ENCODE measurements at regions of chr4 and their contacts with region 1.

Region 1: GRCh38 chr4:38179690-38180377 is 219.6 kb downstream of the PTTG2 start:
- DNase-seq: peak; percentile 56
- ATAC-seq: peak; percentile 85
- H3K4me3 ChIP-seq: no peak overlapping the region
- H3K27ac ChIP-seq: no peak overlapping the region
- H3K4me1 ChIP-seq: peaks cover 39% of the 10 kb centered on the region
- H3K27me3 ChIP-seq: no peaks in the 10 kb centered on the region
- CTCF ChIP-seq: peak; percentile 76 to 94 (median 88)
- EP300 ChIP-seq: no peak
- POLR2A ChIP-seq: no peak
- RAD21 ChIP-seq: peak; percentile 98

Region 2: GRCh38 chr4:38078590-38079421 is 101.0 kb before region 1 on chr4:
- CTCF ChIA-PET with region 1: interaction called, 7 read pairs
- POLR2A ChIA-PET with region 1: no interaction called
- RAD21 ChIA-PET with region 1: interaction called, 12 read pairs
- SMC1A ChIA-PET with region 1: interaction called, 13 read pairs
- in situ Hi-C with region 1: loop called (anchors 5 kb)
- intact Hi-C with region 1: loop called (anchors 5 kb)
- DNase-seq: no peak
- ATAC-seq: peak; percentile 65
- H3K4me3 ChIP-seq: peak overlapping the region; percentile 7; the same call in 1 of the 2 replicates
- H3K27ac ChIP-seq: peak overlapping the region; percentile 87
- H3K4me1 ChIP-seq: peaks cover 47% of the 10 kb centered on the region
- H3K27me3 ChIP-seq: no peaks in the 10 kb centered on the region
- CTCF ChIP-seq: no peak
- EP300 ChIP-seq: no peak
- POLR2A ChIP-seq: no peak
- RAD21 ChIP-seq: no peak

Region 3: DNA sequence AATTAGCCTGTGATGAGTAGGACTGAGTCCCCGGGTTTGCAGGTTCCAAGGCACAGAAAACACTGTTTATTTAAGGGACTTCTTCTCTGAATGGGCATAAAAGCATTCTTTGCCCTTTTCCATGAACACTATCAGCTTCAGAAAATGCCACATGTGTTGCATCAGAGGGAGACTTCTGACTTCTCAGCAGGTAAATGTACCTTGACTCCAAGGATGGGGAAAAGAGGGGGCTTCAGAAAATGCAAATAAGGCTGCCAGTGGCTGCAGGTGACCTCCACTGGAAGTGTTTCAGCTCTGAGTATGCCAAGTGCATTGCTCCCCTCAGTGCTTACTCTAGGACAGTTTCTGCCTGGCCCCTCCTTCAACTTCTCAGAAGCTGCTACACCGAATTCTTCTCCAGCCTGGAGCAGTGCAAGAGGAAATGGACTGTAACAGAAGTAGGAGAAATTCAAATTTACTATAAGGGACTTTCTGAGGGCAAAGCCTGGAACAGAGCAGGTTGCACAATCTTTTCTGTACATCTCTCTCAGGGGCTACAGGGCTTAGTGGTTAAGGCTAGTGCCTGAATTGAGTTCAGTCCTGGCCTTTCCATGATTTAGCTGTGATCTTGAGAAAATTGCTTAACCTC is 13.5 kb after region 1 on chr4:
- CTCF ChIA-PET with region 1: interaction called, 8 read pairs
- POLR2A ChIA-PET with region 1: no interaction called
- RAD21 ChIA-PET with region 1: interaction called, 5 read pairs
- SMC1A ChIA-PET with region 1: interaction called, 20 read pairs
- in situ Hi-C with region 1: no loop called
- intact Hi-C with region 1: no loop called
- DNase-seq: no peak
- ATAC-seq: no peak
- H3K4me3 ChIP-seq: no peak overlapping the region
- H3K27ac ChIP-seq: no peak overlapping the region
- H3K4me1 ChIP-seq: no peaks in the 10 kb centered on the region; the same call in 1 of the 2 replicates
- H3K27me3 ChIP-seq: peaks cover 0 to 1% of the 10 kb centered on the region in 2 experiments; a peak in 2 of 4 replicates
- CTCF ChIP-seq: no peak
- EP300 ChIP-seq: no peak
- POLR2A ChIP-seq: no peak
- RAD21 ChIP-seq: no peak

Region 4: GRCh38 chr4:38663801-38664705 is 484.2 kb after region 1 on chr4 and contains the start of gene KLF3:
- CTCF ChIA-PET with region 1: interaction called, 67 read pairs
- POLR2A ChIA-PET with region 1: interaction called, 3 read pairs
- RAD21 ChIA-PET with region 1: interaction called, 48 read pairs
- SMC1A ChIA-PET with region 1: interaction called, 82 read pairs
- in situ Hi-C with region 1: no loop called
- intact Hi-C with region 1: no loop called
- DNase-seq: no peak
- ATAC-seq: peak; percentile 73
- H3K4me3 ChIP-seq: peak within 1 kb of the TSS; percentile 78
- H3K27ac ChIP-seq: peak within 1 kb of the TSS; percentile 68
- H3K4me1 ChIP-seq: peaks cover 12% of the 10 kb centered on the region
- H3K27me3 ChIP-seq: peaks cover 0 to 4% of the 10 kb centered on the region in 2 experiments; a peak in 1 of 4 replicates
- CTCF ChIP-seq: no peak
- EP300 ChIP-seq: no peak
- POLR2A ChIP-seq: peak; percentile 67
- RAD21 ChIP-seq: no peak
- polyA plus RNA-seq, gene KLF3: 1.4 to 1.5 TPM

Region 5: DNA sequence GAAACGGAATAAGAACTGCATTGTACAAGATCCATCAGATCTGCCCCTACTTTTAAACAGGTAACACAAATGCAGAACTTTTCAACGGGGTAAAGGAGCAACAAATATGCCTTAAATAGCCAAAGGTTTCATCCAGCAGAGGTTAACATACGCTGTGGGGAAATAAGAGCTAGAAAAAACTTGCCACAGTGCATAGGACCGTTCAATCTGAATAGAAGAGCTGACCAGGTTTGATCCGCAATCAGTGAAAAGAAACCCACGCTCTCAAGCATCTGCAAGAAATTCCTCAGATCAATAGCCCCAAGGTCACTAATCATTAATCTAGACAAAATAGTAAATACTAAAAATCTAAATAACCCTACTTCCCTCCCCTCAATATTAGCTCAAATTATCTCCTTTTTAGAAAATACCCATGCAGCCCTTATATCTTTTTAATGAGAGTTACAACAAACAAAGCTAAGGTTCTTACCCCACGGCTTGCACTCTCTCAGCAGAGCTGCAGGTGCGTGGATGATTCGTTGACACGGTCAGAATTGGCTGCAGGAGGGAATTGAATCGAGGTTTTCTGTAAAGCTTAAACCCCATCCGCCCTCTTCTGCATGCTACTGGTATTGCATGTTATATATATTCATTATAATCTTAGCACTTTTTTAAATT is 602.7 kb after region 1 on chr4 and contains the start of gene TLR10:
- CTCF ChIA-PET with region 1: interaction called, 18 read pairs
- POLR2A ChIA-PET with region 1: no interaction called
- RAD21 ChIA-PET with region 1: interaction called, 25 read pairs
- SMC1A ChIA-PET with region 1: interaction called, 19 read pairs
- in situ Hi-C with region 1: no loop called
- intact Hi-C with region 1: no loop called
- DNase-seq: peak; percentile 82
- ATAC-seq: peak; percentile 74
- H3K4me3 ChIP-seq: peak within 1 kb of the TSS; percentile 81
- H3K27ac ChIP-seq: peak within 1 kb of the TSS; percentile 96
- H3K4me1 ChIP-seq: peaks cover 22% of the 10 kb centered on the region
- H3K27me3 ChIP-seq: no peaks in the 10 kb centered on the region
- CTCF ChIP-seq: peak; percentile 60 to 68 (median 63)
- EP300 ChIP-seq: no peak
- POLR2A ChIP-seq: peak; percentile 72
- RAD21 ChIP-seq: peak; percentile 83
- polyA plus RNA-seq, gene TLR10: 31.5 to 41.8 TPM

Measured in GM12878 (cell line).